ENCODE measurements at regions of chr4 and their contacts with region 1.

Region 1: DNA sequence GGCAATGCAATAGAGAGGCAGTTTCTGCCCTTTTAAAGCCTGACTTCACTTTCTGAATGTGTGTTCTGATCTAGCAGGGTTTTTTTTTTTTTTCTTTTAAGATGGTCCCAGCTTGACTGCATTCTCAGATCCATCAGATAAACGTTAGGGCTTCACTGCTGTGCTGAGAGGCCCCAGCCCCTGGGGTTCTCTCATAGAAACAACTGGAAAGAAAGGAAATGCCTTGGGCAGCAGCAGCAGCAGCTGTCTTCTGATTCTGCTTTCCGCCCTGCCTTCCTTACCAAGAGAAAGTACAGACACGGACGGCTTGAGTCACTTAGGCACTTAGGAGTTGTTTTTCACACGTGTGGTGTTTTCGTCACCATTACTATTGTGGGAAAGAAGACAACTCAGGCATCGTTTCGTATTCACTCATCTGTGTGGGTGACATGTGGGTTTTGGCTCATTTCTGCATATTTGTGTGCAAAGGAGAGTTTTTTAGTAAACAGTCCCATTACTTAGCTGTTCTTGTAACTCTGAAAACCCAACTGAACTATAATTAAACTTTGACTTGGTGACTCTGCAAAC is 172.0 kb downstream of the PTTG2 start:
- DNase-seq: peak; percentile 85
- H3K4me3 Mint-ChIP-seq: peak overlapping the region; percentile 25
- H3K27ac Mint-ChIP-seq: peak overlapping the region; percentile 93
- H3K4me1 Mint-ChIP-seq: peaks cover 25% of the 10 kb centered on the region
- H3K27me3 Mint-ChIP-seq: no peaks in the 10 kb centered on the region
- CTCF ChIP-seq: no peak

Region 2: DNA sequence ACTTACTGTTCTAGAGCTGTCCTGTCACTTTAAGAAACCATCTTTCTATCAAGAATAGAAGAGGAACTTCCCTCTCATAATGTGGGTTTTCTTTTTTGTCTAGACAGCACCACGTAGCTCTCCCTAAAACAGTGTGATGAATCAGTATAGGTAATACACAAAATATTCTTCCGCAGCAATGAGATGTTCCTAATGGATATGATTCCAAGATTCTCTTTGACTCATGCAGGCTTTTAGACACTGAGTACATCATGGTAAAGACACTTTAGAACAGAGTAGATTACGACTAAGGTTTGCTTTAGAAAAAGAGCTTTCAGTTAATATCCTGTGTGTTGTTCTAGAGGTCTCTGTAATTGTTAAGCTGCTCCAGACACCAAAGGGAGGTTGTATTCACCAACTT is 102.2 kb before region 1 on chr4:
- CTCF ChIA-PET with region 1: no interaction called
- POLR2A ChIA-PET with region 1: no interaction called
- intact Hi-C with region 1: no loop called
- DNase-seq: no peak
- H3K4me3 Mint-ChIP-seq: no peak overlapping the region
- H3K27ac Mint-ChIP-seq: no peak overlapping the region
- H3K4me1 Mint-ChIP-seq: no peaks in the 10 kb centered on the region
- H3K27me3 Mint-ChIP-seq: no peaks in the 10 kb centered on the region
- CTCF ChIP-seq: no peak

Region 3: GRCh38 chr4:38078590-38079421 is 53.4 kb before region 1 on chr4:
- CTCF ChIA-PET with region 1: no interaction called
- POLR2A ChIA-PET with region 1: interaction called, 3 read pairs
- intact Hi-C with region 1: loop called (anchors 5 kb)
- DNase-seq: peak; percentile 71
- H3K4me3 Mint-ChIP-seq: peak overlapping the region; percentile 5
- H3K27ac Mint-ChIP-seq: peak overlapping the region; percentile 82
- H3K4me1 Mint-ChIP-seq: peaks cover 28% of the 10 kb centered on the region
- H3K27me3 Mint-ChIP-seq: no peaks in the 10 kb centered on the region
- CTCF ChIP-seq: no peak

Region 4: GRCh38 chr4:38396845-38397547 is 264.8 kb after region 1 on chr4:
- CTCF ChIA-PET with region 1: no interaction called
- POLR2A ChIA-PET with region 1: no interaction called
- intact Hi-C with region 1: no loop called
- DNase-seq: no peak
- H3K4me3 Mint-ChIP-seq: no peak overlapping the region
- H3K27ac Mint-ChIP-seq: no peak overlapping the region
- H3K4me1 Mint-ChIP-seq: no peaks in the 10 kb centered on the region
- H3K27me3 Mint-ChIP-seq: no peaks in the 10 kb centered on the region
- CTCF ChIP-seq: no peak

Measured in MCF 10A (cell line).